Thyroid gland (tissue), 4 donors: ENCODE measurements at regions of chr2 and their contacts with region 1.

Region 1: DNA sequence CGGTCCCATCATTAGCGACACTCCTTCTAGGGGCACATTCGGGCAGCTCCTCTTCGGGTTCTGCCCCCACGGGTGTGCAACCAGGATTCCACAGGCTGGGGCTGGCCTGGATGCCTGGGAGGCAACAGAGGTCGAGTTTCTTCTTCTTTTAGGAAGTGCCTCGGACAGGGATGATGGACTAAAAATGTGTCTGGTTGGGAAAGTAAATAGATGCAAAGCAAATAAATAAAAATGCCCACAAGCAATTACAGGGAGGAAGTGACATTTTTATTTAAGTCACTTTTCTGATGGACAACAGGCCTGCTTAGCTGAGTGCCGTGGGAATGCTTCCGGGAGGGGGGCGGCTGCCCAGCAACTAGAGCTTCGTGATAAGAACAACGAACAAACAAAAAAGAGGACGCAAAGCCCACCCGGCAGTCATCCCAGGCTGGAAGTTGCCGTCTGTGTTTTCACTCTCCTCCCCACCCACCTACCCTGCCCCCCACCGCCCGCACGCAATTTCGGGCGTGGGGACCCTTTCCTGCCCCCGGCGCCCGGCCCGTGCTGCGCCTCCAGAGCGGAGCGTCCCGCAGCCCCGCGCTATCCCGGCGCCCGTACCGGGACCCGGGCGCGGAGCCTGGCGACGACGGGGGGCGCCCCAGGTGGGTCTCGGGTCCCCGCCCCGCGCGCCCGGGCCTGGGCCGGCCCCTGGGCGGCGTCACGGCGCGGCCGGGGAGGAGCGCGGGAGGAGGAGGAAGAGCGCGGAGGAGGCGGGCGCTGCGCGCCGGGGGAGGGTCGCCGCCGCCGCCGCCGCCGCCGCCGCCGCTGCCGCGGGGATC is 412 bp upstream of the NCK2 start:
- DNase-seq: peak; percentile 64 to 68
- H3K4me3 ChIP-seq: peak overlapping the region in 2 of 3 donors; percentile 28 to 71
- H3K27ac ChIP-seq: peak overlapping the region; percentile 87 to 95 (median 91)
- H3K4me1 ChIP-seq: peaks cover 26 to 44% of the 10 kb centered on the region in 2 donors
- H3K27me3 ChIP-seq: no peaks in the 10 kb centered on the region
- CTCF ChIP-seq: no peak
- POLR2A ChIP-seq: peak; percentile 28 to 85

Region 2: DNA sequence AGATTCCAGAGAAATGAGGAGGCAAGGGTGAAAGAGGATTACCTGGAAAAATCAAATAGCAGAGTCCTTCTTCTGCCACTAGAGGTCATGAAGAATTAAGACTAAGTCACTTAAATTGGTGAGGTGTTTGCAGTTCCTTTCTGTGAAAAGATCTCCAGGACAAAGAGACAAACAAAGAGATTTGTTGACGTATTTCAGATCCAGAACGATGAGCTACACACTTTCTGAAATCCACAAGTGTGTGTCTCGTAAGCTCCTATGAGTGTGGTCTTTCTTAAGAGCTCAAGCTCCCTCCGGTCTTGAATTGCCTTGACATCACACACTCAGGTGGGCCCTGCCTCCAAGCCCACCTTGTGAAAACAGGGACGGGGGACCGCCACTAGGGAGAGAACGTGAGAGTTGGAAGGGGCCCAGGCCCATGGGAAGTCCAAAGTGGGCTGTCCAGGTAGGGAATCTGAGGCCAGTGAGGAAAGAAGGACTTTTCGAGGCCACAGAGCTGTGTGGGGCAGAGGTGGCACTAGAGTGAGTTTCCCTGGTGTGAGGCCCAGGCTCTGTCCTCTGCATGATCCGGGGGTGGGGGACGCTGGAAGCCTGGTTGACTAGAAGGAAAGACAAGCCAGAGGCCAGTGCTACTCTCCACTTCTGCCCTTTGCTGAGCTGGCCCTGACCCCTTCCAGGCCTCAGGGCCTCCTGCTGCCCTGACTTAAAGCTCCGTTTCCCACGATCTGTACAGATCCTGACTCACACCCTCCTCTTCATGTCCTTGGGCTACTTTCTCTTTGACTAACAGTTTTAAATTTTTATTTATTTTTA is 167.7 kb before region 1 on chr2:
- intact Hi-C with region 1: loop called (anchors 10 kb)
- DNase-seq: no peak
- H3K4me3 ChIP-seq: no peak overlapping the region
- H3K27ac ChIP-seq: peak overlapping the region in 1 of 3 donors; percentile 42
- H3K4me1 ChIP-seq: peaks cover 4 to 7% of the 10 kb centered on the region in 2 donors
- H3K27me3 ChIP-seq: no peaks in the 10 kb centered on the region
- CTCF ChIP-seq: peak in 5 of 6 experiments; percentile 43 to 82 (median 62)
- POLR2A ChIP-seq: no peak

Region 3: GRCh38 chr2:105888625-105889400 is 144.5 kb after region 1 on chr2:
- intact Hi-C with region 1: loop called (anchors 10 kb)
- DNase-seq: no peak
- H3K4me3 ChIP-seq: no peak overlapping the region
- H3K27ac ChIP-seq: no peak overlapping the region
- H3K4me1 ChIP-seq: peaks cover 21 to 27% of the 10 kb centered on the region in 2 donors
- H3K27me3 ChIP-seq: no peaks in the 10 kb centered on the region
- CTCF ChIP-seq: no peak
- POLR2A ChIP-seq: no peak

Region 4: GRCh38 chr2:105943977-105944376 is 199.7 kb after region 1 on chr2:
- intact Hi-C with region 1: loop called (anchors 10 kb)
- DNase-seq: no peak
- H3K4me3 ChIP-seq: no peak overlapping the region
- H3K27ac ChIP-seq: no peak overlapping the region
- H3K4me1 ChIP-seq: no peaks in the 10 kb centered on the region
- H3K27me3 ChIP-seq: no peaks in the 10 kb centered on the region
- CTCF ChIP-seq: no peak
- POLR2A ChIP-seq: no peak